ENCODE measurements at regions of chr9 and their contacts with region 1.

Region 1: GRCh38 chr9:75027187-75028107 is 646 bp downstream of the CARNMT1 start:
- DNase-seq: no peak
- ATAC-seq: peak; percentile 74
- H3K4me3 ChIP-seq: peak overlapping the region; percentile 76
- H3K27ac ChIP-seq: peak overlapping the region; percentile 81
- H3K4me1 ChIP-seq: no peaks in the 10 kb centered on the region; the same call in 1 of the 2 replicates
- H3K27me3 ChIP-seq: no peaks in the 10 kb centered on the region
- CTCF ChIP-seq: peak in 2 of 3 experiments; percentile 3 to 37; a peak in 2 of 6 replicates
- EP300 ChIP-seq: no peak
- POLR2A ChIP-seq: no peak
- RAD21 ChIP-seq: no peak

Region 2: GRCh38 chr9:75013735-75014134 is 13.7 kb before region 1 on chr9:
- CTCF ChIA-PET with region 1: interaction called, 9 read pairs
- POLR2A ChIA-PET with region 1: interaction called, 8 read pairs
- RAD21 ChIA-PET with region 1: no interaction called
- SMC1A ChIA-PET with region 1: interaction called, 20 read pairs
- in situ Hi-C with region 1: no loop called
- intact Hi-C with region 1: no loop called
- DNase-seq: no peak
- ATAC-seq: no peak
- H3K4me3 ChIP-seq: no peak overlapping the region
- H3K27ac ChIP-seq: no peak overlapping the region
- H3K4me1 ChIP-seq: no peaks in the 10 kb centered on the region
- H3K27me3 ChIP-seq: no peaks in the 10 kb centered on the region
- CTCF ChIP-seq: no peak
- EP300 ChIP-seq: no peak
- POLR2A ChIP-seq: no peak
- RAD21 ChIP-seq: no peak

Region 3: GRCh38 chr9:75088260-75088905 is 60.9 kb after region 1 on chr9 and contains the start of gene OSTF1:
- CTCF ChIA-PET with region 1: interaction called, 14 read pairs
- POLR2A ChIA-PET with region 1: interaction called, 31 read pairs
- RAD21 ChIA-PET with region 1: interaction called, 14 read pairs
- SMC1A ChIA-PET with region 1: interaction called, 74 read pairs
- in situ Hi-C with region 1: no loop called
- intact Hi-C with region 1: loop called (anchors 1 kb)
- DNase-seq: peak; percentile 64
- ATAC-seq: peak; percentile 89
- H3K4me3 ChIP-seq: peak within 1 kb of the TSS; percentile 93
- H3K27ac ChIP-seq: peak within 1 kb of the TSS; percentile 93
- H3K4me1 ChIP-seq: peaks cover 13% of the 10 kb centered on the region; the same call in 1 of the 2 replicates
- H3K27me3 ChIP-seq: no peaks in the 10 kb centered on the region
- CTCF ChIP-seq: no peak
- EP300 ChIP-seq: no peak
- POLR2A ChIP-seq: peak; percentile 95
- RAD21 ChIP-seq: no peak
- polyA plus RNA-seq, gene OSTF1: 36.2 to 45.3 TPM

Measured in GM12878 (cell line).